ENCODE measurements at regions of chr12 and their contacts with region 1.

Region 1: GRCh38 chr12:5428332-5429221 is 3.3 kb upstream of the NTF3 start:
- DNase-seq: no peak
- H3K4me3 ChIP-seq: peak overlapping the region; percentile 42
- H3K27ac ChIP-seq: no peak overlapping the region
- H3K27me3 ChIP-seq: peaks cover 6% of the 10 kb centered on the region
- CTCF ChIP-seq: peak; percentile 80

Region 2: DNA sequence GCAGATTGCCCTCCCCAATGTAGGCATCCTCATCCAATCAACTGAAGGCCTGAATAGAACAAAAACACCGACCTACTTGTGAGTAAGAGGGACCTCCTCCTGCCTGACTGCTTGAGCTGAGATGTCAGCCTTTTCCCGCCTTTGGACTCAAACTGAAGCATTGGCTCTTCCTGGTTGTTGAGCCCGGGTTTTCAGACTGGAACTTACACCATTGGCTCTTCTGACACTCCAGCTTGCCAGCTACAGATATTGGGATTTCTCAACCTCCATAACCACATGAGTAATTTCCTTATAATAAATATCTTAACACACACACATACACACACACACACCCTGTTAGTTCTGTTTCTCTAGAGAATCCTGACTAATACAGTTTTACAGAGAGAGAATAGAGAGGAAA is 170.1 kb before region 1 on chr12:
- CTCF ChIA-PET with region 1: no interaction called
- POLR2A ChIA-PET with region 1: no interaction called
- DNase-seq: peak; percentile 37
- H3K4me3 ChIP-seq: no peak overlapping the region
- H3K27ac ChIP-seq: no peak overlapping the region
- H3K27me3 ChIP-seq: no peaks in the 10 kb centered on the region
- CTCF ChIP-seq: no peak

Region 3: DNA sequence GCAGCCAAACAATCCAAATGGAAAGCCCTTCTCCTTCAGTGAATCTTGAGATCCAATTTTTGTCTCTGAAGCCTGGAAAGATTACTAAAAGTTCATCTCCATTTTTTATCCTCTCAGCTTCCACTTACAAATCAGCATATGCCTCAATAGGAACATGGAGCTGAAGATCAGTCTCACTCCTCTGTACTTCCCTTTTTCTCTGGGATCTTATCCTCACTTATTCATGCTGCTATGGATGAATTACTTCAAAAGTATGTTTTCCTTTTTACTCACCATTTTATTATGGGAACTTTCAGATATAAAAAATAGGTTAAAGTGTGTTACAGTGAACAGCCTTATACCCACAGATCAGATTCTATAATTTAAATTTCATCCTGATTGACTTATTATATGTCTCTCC is 11.1 kb before region 1 on chr12:
- CTCF ChIA-PET with region 1: interaction called, 30 read pairs
- POLR2A ChIA-PET with region 1: no interaction called
- DNase-seq: no peak
- H3K4me3 ChIP-seq: no peak overlapping the region
- H3K27ac ChIP-seq: no peak overlapping the region
- H3K27me3 ChIP-seq: no peaks in the 10 kb centered on the region
- CTCF ChIP-seq: no peak

Region 4: GRCh38 chr12:5488626-5488955 is 60.0 kb after region 1 on chr12:
- CTCF ChIA-PET with region 1: interaction called, 5 read pairs
- POLR2A ChIA-PET with region 1: interaction called, 14 read pairs
- DNase-seq: peak; percentile 44
- H3K4me3 ChIP-seq: no peak overlapping the region
- H3K27ac ChIP-seq: peak overlapping the region; percentile 87
- H3K27me3 ChIP-seq: no peaks in the 10 kb centered on the region
- CTCF ChIP-seq: no peak

Region 5: GRCh38 chr12:5518584-5519365 is 90.2 kb after region 1 on chr12:
- CTCF ChIA-PET with region 1: interaction called, 133 read pairs
- POLR2A ChIA-PET with region 1: no interaction called
- DNase-seq: no peak
- H3K4me3 ChIP-seq: no peak overlapping the region
- H3K27ac ChIP-seq: no peak overlapping the region
- H3K27me3 ChIP-seq: no peaks in the 10 kb centered on the region
- CTCF ChIP-seq: no peak

Region 6: DNA sequence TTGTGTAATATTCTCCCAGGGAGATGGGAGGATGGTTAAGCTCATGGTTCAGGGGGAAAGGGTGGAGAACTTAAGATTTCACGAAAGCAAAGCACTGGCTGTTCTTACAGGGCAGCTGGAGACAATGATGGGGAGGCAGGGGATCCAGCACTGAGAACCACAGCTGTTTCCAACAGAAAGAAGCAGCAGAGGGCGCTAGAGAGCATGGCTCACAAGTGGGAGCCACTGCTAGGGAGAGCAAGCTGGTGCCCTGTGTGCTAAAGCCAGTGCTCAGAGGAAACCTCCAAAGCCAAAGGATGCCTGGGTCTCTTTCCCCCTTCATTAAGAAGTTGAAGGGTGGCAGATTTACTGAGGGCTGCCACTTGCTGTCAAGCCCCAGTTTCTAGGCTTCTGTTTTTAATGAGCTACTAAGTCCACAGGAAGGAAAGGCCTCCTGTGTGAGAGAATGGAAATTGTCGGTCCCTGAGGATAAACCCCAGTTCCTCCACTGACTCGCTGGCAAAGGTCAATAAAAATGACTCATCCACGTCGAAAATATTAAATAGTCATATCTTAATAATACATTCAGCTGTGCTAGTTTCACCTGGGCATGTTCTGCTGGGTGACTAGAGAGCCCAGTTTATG is 316.8 kb after region 1 on chr12:
- CTCF ChIA-PET with region 1: interaction called, 46 read pairs
- POLR2A ChIA-PET with region 1: no interaction called
- DNase-seq: peak; percentile 20
- H3K4me3 ChIP-seq: no peak overlapping the region
- H3K27ac ChIP-seq: no peak overlapping the region
- H3K27me3 ChIP-seq: peaks cover 3% of the 10 kb centered on the region
- CTCF ChIP-seq: peak; percentile 81

Region 7: GRCh38 chr12:6764011-6764828 is 1335.6 kb after region 1 on chr12:
- CTCF ChIA-PET with region 1: interaction called, 11 read pairs
- POLR2A ChIA-PET with region 1: no interaction called
- DNase-seq: peak; percentile 98
- H3K4me3 ChIP-seq: peak overlapping the region; percentile 49
- H3K27ac ChIP-seq: peak overlapping the region; percentile 94
- H3K27me3 ChIP-seq: no peaks in the 10 kb centered on the region
- CTCF ChIP-seq: no peak